ENCODE measurements at regions of chr1 and their contacts with region 1.

Region 1: GRCh38 chr1:72869873-72870272 is 587.5 kb upstream of the NEGR1 start:
- DNase-seq: peak; percentile 80
- H3K4me3 ChIP-seq: no peak overlapping the region
- H3K27ac ChIP-seq: peak overlapping the region; percentile 84
- H3K4me1 ChIP-seq: peaks cover 31% of the 10 kb centered on the region
- H3K27me3 ChIP-seq: no peaks in the 10 kb centered on the region
- CTCF ChIP-seq: no peak

Region 2: GRCh38 chr1:71919811-71920509 is 949.9 kb before region 1 on chr1:
- CTCF ChIA-PET with region 1: no interaction called
- POLR2A ChIA-PET with region 1: no interaction called
- intact Hi-C with region 1: loop called (anchors 10 kb)
- DNase-seq: peak; percentile 97
- H3K4me3 ChIP-seq: no peak overlapping the region
- H3K27ac ChIP-seq: peak overlapping the region; percentile 13
- H3K4me1 ChIP-seq: peaks cover 21% of the 10 kb centered on the region
- H3K27me3 ChIP-seq: no peaks in the 10 kb centered on the region
- CTCF ChIP-seq: no peak

Region 3: DNA sequence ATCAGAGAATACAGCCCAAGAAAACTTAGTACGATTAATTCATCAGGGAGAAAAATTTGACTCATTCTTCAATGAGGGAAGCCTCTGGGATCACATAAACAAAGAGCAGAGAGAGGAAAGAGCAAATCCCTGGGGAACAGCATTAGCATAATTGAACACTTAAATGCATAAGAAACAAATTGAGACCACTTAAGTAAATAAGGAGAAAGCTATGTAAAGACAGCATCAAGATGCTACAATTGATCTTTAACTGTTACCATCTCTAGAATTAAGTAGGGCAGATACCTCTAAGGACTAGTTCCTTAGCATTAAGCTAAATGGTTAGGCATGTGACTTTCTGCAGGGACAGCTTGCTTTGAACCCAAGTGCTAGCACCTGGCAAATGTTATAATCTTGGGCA is 322.5 kb before region 1 on chr1:
- CTCF ChIA-PET with region 1: no interaction called
- POLR2A ChIA-PET with region 1: no interaction called
- intact Hi-C with region 1: no loop called
- DNase-seq: peak; percentile 86
- H3K4me3 ChIP-seq: peak overlapping the region; percentile 13
- H3K27ac ChIP-seq: no peak overlapping the region
- H3K4me1 ChIP-seq: no peaks in the 10 kb centered on the region
- H3K27me3 ChIP-seq: no peaks in the 10 kb centered on the region
- CTCF ChIP-seq: no peak

Region 4: DNA sequence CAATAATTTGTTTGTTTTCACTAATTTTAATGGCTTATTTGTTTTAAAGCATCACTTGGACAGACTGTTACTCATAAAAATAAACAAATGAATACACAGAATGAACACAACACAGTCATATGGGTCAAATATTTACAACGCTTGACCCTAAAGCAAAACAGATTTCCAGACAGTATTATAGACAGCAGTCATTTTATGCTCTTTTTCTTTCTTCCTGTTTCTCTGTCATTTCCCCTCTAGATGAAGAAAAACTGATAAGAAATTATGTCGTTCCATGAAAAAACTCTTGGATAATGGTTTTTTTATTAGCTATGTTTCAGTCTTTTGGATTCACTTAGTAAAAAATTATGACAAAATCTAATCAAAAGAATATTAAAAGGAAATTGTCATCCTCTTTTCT is 290.2 kb before region 1 on chr1:
- CTCF ChIA-PET with region 1: no interaction called
- POLR2A ChIA-PET with region 1: no interaction called
- intact Hi-C with region 1: no loop called
- DNase-seq: no peak
- H3K4me3 ChIP-seq: no peak overlapping the region
- H3K27ac ChIP-seq: no peak overlapping the region
- H3K4me1 ChIP-seq: no peaks in the 10 kb centered on the region
- H3K27me3 ChIP-seq: no peaks in the 10 kb centered on the region
- CTCF ChIP-seq: no peak

Region 5: DNA sequence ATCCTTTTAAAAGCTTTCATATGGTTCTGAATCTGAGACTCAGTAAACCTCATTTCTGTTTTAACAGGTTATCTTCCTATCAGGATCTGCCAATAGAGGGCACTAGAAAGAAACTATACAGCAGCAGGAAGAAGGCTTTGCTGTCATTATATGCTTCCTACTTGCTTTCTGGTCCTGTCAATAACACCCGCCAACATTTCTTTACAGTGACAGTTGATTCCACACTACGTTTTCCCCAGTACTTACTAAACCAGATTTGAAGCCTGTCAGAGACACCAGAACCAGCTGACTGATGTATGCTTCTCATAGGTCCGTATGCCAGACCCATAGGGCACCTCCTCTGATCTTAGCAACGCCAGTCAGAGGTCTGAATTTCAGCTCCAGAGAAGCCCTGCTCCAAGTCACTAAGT is 246.6 kb before region 1 on chr1:
- CTCF ChIA-PET with region 1: no interaction called
- POLR2A ChIA-PET with region 1: no interaction called
- intact Hi-C with region 1: loop called (anchors 5 kb)
- DNase-seq: peak; percentile 86
- H3K4me3 ChIP-seq: no peak overlapping the region
- H3K27ac ChIP-seq: peak overlapping the region; percentile 32
- H3K4me1 ChIP-seq: peaks cover 7% of the 10 kb centered on the region
- H3K27me3 ChIP-seq: no peaks in the 10 kb centered on the region
- CTCF ChIP-seq: peak; percentile 76

Region 6: GRCh38 chr1:73100216-73100615 is 230.3 kb after region 1 on chr1:
- CTCF ChIA-PET with region 1: no interaction called
- POLR2A ChIA-PET with region 1: no interaction called
- intact Hi-C with region 1: loop called (anchors 10 kb)
- DNase-seq: peak; percentile 80
- H3K4me3 ChIP-seq: no peak overlapping the region
- H3K27ac ChIP-seq: no peak overlapping the region
- H3K4me1 ChIP-seq: peaks cover 16% of the 10 kb centered on the region
- H3K27me3 ChIP-seq: no peaks in the 10 kb centered on the region
- CTCF ChIP-seq: peak; percentile 56; the same call in 1 of the 2 replicates